Mammary epithelial cell (primary cell): ENCODE measurements at regions of chr1 and their contacts with region 1.

Region 1: DNA sequence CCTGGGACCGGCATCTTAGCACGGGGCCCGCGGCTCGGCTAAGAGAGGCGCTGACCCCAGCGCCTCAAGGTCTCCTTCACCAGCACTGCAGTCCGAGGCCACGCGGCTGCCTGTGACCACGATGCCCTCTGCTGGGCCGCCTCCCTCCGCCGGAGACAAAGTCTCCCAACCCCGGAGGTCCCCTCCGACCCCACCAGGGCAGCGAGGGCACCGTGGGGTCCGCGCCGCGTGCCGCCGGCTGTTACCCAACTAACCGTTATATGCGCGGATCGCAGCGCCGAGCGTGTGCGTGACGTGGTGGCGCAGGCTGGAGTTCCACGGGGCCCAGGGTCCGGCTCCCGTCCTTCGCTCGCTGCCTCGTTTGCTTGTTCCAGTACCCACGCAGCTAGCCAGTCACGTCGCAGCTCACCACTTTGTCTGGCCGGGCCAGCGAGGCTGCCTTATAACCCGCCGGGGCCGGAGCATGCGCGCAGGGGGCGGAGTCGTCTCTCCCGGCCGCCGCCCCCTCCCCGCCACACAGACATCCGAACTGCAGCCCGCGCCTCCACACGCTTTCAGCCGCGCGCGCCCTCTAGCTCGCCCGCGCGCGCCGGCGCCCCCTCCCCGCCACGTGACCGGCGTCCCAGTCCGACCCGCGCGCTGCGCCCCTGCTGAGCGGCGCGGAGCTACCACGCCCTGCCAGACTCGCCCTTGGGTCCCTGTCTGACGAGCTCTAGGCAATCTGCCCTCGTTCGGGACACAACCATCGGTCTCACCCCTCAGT is at the start of gene SLC16A1:
- DNase-seq: peak; percentile 90
- H3K4me3 ChIP-seq: peak within 1 kb of the TSS; percentile 83 to 96 (median 93)
- H3K27ac ChIP-seq: peak within 1 kb of the TSS; percentile 78
- H3K4me1 ChIP-seq: peaks cover 22% of the 10 kb centered on the region
- H3K27me3 ChIP-seq: no peaks in the 10 kb centered on the region
- CTCF ChIP-seq: peak in 1 of 2 donors; percentile 30
- total RNA-seq, gene SLC16A1: 167 to 239 TPM

Region 2: DNA sequence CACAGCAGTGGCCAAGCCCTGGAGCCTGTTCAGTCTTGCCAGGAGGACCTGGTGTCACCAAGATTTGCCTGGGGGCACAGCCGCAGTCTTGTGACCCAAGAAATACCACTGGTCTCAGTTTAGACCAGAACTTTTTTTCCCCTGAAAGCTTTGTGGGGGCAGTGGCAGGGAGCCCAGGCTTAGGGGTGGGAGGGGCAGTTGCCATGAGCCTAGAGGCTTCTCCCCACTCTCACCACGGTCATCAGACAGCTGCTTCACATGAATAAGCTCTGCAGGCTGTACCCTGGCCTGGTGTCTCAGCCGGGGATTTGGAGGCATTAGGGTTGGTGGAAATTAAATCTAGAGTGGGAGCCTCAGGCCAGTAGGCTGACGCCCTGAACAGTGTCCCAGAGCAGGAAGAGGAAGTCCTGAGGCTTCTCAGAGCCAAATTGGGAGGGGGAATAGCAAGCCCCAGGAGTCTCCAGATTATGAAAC is 73.7 kb before region 1 on chr1:
- CTCF ChIA-PET with region 1: no interaction called
- dilution Hi-C with region 1: no loop called
- in situ Hi-C with region 1: no loop called
- intact Hi-C with region 1: loop called (anchors 1 kb)
- DNase-seq: no peak
- H3K4me3 ChIP-seq: no peak overlapping the region
- H3K27ac ChIP-seq: no peak overlapping the region
- H3K4me1 ChIP-seq: peaks cover 14% of the 10 kb centered on the region
- H3K27me3 ChIP-seq: no peaks in the 10 kb centered on the region
- CTCF ChIP-seq: no peak

Region 3: GRCh38 chr1:112935461-112936289 is 20.3 kb before region 1 on chr1:
- CTCF ChIA-PET with region 1: no interaction called
- dilution Hi-C with region 1: no loop called
- in situ Hi-C with region 1: no loop called
- intact Hi-C with region 1: loop called (anchors 1 kb)
- DNase-seq: peak; percentile 64
- H3K4me3 ChIP-seq: no peak overlapping the region
- H3K27ac ChIP-seq: peak overlapping the region; percentile 86
- H3K4me1 ChIP-seq: peaks cover 42% of the 10 kb centered on the region
- H3K27me3 ChIP-seq: no peaks in the 10 kb centered on the region
- CTCF ChIP-seq: no peak

Region 4: DNA sequence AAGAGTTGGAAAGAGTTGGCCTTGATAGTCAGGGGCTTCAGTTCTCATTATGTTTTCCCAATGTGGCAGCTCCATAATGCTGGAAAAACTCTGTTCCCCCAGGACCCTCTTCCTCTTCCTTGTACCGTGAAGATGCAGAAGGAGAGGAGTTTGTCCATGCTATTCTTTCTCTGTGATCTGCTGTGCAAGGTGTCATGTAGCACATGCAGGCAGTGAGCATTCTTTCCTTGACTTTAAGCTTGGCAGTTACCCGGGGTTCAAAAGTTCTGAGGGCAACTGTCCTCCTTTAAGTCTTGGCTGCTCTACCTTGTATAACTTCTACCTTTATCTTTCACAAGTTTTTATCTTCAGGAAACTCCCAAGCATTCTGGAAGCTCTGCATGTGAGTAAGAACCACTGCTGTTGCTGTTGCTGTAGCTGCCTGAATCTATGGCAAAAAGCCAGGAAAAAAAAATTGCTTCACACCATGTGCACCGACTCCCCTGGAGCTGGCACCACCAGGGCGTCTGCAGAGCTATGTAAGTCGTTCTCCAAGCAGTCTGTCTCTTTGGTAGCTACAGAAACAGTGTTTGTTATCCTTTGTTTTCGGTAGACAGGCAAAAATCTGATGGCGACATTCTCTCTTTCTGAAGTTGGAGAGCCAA is 42.8 kb after region 1 on chr1:
- CTCF ChIA-PET with region 1: no interaction called
- dilution Hi-C with region 1: no loop called
- in situ Hi-C with region 1: no loop called
- intact Hi-C with region 1: no loop called
- DNase-seq: peak; percentile 79
- H3K4me3 ChIP-seq: no peak overlapping the region
- H3K27ac ChIP-seq: no peak overlapping the region
- H3K4me1 ChIP-seq: peaks cover 12% of the 10 kb centered on the region
- H3K27me3 ChIP-seq: no peaks in the 10 kb centered on the region
- CTCF ChIP-seq: no peak

Region 5: DNA sequence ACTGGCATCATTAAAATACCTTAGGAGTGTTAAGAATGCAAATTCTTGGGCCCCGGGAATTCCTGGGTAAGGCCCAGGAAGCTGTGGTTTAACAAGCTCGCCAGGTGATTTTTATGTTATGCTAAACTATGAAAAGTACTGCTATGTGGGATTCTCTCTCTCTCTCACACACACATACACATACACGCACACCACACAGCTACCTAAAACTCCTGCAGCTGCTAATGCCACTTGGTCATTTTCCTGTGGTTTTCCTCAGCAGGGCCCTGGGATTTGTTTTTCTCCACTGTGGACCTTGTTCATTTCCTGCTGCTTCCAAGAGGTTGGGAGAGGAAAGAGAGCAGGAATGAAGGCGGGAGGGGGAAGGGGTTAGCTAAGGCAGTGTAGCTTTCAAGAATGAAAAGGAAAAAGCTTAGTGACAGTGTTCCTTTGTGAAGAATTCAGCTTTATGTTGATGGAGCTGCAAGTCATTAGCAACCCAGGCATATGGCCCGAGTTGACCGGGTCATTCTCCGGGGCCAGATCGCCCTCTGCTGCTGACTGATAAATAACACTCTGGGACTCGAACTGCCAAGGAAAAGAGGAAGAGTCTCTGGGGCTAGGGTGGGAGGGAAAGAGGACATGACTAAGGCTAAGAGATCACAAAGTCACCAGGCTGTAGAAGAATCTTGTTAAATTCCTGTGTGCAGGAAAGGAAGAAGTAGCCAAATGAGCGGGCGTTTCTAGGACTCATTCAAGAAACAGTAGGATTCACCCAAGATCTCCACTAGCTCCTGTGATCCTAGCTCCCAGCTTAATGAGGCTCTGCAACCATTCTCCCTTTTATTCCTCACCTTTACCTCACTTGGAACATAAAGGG is 86.6 kb after region 1 on chr1:
- CTCF ChIA-PET with region 1: no interaction called
- dilution Hi-C with region 1: no loop called
- in situ Hi-C with region 1: loop called in 1 of 2 experiments (anchors 5 kb)
- intact Hi-C with region 1: loop called (anchors 1 kb)
- DNase-seq: peak; percentile 84
- H3K4me3 ChIP-seq: no peak overlapping the region
- H3K27ac ChIP-seq: peak overlapping the region; percentile 79
- H3K4me1 ChIP-seq: peaks cover 31% of the 10 kb centered on the region
- H3K27me3 ChIP-seq: no peaks in the 10 kb centered on the region
- CTCF ChIP-seq: peak; percentile 41 to 71

Region 6: GRCh38 chr1:113123737-113124136 is 167.8 kb after region 1 on chr1:
- CTCF ChIA-PET with region 1: no interaction called
- dilution Hi-C with region 1: no loop called
- in situ Hi-C with region 1: no loop called
- intact Hi-C with region 1: no loop called
- DNase-seq: no peak
- H3K4me3 ChIP-seq: no peak overlapping the region
- H3K27ac ChIP-seq: no peak overlapping the region
- H3K4me1 ChIP-seq: no peaks in the 10 kb centered on the region
- H3K27me3 ChIP-seq: no peaks in the 10 kb centered on the region
- CTCF ChIP-seq: no peak